Activated T-helper 1 cell treated with anti-CD3 and anti-CD28 coated beads, Interleukin-12 subunit alpha, Interleukin-12 subunit beta, Interleukin-2, Interleukin-4 antibody, amounts not matched to agents 30 ng/mL and 10 ng/mL and 1 ng/mL, durations not matched to agents 14 hours and 24 hours and 36 hours (primary cell): ENCODE measurements at regions of chr6 and their contacts with region 1.

Region 1: DNA sequence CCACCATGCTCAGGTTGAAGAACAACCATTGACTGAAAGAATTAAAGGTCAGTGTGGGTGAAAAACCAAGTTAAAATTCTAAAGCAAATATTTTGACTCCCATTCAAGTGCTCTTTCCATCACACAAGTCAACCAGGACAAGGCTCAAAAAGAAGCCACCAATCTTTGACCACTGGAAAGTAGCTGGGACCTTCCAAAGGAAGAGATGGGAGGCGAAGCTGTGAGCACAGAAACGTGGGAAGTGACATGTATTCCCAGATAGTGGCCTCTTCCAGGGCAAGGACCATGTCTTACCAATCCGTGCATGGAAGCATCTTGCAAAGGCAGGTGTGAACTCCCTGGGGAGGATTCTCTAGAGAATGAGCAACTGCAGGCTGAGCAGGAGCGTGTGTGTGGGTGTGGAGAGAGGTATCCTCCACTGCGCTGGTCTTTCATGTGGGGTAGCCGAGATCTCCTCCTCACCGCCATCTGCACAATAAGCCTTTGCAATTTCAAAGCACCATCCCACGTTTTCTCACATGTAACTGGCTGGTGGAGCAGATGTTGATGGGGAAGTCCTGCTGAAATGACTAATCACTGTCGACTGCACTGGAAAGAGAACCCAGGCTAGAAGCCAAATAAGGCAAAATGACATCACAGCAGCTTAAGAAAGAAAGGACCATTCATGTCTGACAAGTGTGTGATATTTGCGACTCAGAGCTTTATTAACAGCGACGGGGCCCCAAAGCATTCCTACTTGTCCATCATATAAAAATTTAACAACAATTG is 189.4 kb upstream of the RREB1 start:
- DNase-seq: peak; percentile 44
- H3K4me3 Mint-ChIP-seq: no peak overlapping the region
- H3K27ac Mint-ChIP-seq: peak overlapping the region; percentile 55
- H3K4me1 Mint-ChIP-seq: peaks cover 37% of the 10 kb centered on the region
- H3K27me3 Mint-ChIP-seq: peaks cover 18% of the 10 kb centered on the region

Region 2: GRCh38 chr6:6452002-6452401 is 466.4 kb before region 1 on chr6:
- intact Hi-C with region 1: no loop called
- DNase-seq: no peak
- H3K4me3 Mint-ChIP-seq: no peak overlapping the region
- H3K27ac Mint-ChIP-seq: no peak overlapping the region
- H3K4me1 Mint-ChIP-seq: no peaks in the 10 kb centered on the region
- H3K27me3 Mint-ChIP-seq: peaks cover 3% of the 10 kb centered on the region

Region 3: DNA sequence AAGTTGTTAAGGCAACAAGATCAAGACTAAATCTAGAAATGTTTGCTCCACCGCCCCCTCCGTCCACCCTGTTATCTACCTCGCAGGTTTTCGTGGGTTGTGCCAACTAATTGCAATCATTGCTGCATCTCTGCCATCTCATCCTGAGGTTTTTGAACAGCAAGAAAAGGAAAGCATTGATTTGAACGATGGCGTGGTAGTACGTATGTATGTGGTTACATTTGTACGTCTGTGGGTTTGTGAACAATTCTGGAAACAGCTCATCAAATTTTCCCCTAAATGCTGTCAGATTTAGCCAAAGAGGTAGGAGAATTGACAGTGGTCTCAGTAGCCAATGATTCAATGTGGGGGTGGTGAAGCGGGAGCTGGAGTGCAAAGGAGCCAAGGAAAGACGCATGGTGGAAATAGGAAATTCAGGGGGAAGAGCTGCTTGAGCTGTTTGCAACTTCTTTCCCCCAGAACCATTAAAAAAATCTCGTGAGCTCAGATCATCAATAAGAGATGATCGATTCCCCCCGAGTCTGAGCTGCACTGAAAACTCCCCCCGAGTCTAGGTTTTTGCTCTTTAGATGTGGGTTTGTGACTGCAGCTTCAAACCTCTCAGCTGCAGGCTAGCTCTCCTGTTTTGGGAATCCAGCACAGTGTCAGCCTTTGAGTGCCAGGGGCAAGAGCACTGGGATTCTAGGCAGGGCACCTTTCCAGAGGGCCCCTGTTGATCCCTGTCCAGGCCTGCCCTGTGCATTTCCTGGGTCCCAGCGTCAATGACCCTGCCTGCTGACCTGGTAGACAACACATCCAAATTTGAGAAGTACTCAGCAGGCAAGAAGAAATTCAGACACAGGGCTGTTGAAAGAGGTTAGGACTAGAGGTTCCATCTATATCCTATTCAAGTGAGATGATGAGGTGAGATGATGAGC is 402.5 kb before region 1 on chr6:
- intact Hi-C with region 1: loop called (anchors 1 kb)
- DNase-seq: peak; percentile 38
- H3K4me3 Mint-ChIP-seq: no peak overlapping the region
- H3K27ac Mint-ChIP-seq: peak overlapping the region; percentile 21
- H3K4me1 Mint-ChIP-seq: peaks cover 18% of the 10 kb centered on the region
- H3K27me3 Mint-ChIP-seq: peaks cover 80% of the 10 kb centered on the region

Region 4: DNA sequence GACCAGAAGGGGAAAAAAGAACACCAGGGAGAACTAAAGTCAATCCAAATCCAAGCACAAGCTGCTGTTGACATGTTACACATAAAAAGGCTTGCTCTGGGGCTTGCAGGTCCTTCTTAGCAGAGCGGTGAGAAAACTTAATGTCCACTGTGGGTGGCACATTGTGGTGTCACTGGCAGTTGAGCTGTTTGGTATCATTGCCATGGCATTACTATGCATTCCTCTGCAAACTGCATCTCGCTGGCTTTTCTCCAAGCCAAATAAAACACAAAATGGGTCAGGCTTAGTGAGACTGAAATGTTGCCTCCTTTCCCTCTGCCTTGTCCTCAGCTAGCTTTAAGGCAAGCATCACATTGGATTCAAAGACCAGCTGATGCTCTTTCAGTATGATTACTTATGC is 289.0 kb before region 1 on chr6:
- intact Hi-C with region 1: no loop called
- DNase-seq: no peak
- H3K4me3 Mint-ChIP-seq: no peak overlapping the region
- H3K27ac Mint-ChIP-seq: no peak overlapping the region
- H3K4me1 Mint-ChIP-seq: peaks cover 22% of the 10 kb centered on the region
- H3K27me3 Mint-ChIP-seq: peaks cover 4% of the 10 kb centered on the region

Region 5: GRCh38 chr6:6676910-6677441 is 241.4 kb before region 1 on chr6:
- intact Hi-C with region 1: loop called (anchors 2 kb)
- DNase-seq: peak; percentile 70
- H3K4me3 Mint-ChIP-seq: no peak overlapping the region
- H3K27ac Mint-ChIP-seq: no peak overlapping the region
- H3K4me1 Mint-ChIP-seq: peaks cover 24% of the 10 kb centered on the region
- H3K27me3 Mint-ChIP-seq: no peaks in the 10 kb centered on the region

Region 6: DNA sequence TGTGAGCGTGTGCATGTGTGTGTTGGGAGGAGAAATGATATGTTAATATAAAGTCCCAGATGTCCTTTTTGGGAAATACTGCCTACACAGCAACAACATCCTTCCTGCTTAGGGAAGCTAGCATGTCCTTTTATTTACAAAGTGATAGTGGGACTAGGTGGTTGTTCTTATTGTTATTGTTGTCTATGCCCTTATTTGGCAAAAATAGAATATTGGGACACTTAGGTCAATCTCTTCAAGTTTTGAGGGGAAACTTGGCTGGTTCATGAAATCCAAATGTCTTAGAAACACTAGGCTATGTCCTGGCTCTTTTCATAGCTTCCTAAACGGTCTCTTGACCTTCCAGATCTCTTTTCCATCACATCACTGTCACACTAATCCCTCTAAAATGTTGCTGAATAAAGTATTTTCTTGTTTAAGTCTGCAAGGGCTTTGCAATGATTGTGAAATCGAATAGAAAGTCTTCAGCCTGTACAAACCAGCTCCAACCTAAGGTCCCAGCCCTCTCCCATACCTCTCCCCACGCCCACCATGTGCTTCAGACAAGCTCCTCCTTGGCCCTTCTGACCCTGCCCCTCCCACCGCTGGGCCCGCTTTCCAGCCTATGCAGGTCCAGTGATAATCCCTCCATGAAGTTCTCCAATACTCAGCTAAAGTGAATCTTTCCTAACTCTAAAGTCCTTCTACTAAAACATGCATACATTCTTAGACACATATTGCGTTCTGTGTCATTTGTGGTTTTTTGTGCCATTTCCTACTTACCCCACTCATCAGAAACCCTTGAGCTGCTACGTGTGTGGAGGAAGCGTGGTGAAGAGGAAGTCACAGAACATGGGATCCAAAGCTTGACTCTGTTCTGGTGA is 124.8 kb before region 1 on chr6:
- intact Hi-C with region 1: loop called (anchors 1 kb)
- DNase-seq: no peak
- H3K4me3 Mint-ChIP-seq: peak overlapping the region; percentile 48
- H3K27ac Mint-ChIP-seq: peak overlapping the region; percentile 82
- H3K4me1 Mint-ChIP-seq: peaks cover 51% of the 10 kb centered on the region
- H3K27me3 Mint-ChIP-seq: peaks cover 10% of the 10 kb centered on the region

Region 7: DNA sequence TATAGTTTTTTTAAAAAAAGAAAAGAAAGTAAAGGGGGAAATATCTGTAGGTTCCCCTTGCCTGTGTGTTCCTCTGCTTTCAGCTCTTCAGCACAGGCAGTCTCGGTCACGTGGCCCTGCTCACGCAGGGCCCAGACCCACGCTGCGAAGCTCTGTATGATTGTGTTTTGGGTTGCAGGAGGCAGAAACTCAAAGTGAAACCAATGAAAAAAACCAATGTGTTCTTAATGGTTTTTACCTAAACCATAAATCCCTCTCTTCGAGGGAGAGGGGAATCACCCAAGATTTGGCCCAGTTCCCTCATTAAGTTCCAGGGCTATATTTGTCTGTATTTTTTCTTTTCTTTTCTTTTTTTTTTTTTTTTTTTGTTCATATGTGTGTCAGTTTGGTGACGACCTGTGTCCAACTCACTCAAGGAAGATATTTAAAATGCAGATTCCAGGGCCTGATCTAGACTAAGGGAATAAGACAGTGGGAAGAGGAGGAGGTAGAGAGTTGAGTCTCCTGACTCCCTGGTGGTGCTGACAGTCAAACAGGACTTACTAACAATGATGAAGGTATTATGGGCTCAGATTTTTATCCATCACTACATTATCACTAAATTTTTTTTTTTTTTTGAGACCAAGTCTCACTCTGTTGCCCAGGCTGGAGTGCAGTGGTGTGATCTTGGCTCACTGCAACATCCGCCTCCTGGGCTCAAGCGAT is 155.6 kb after region 1 on chr6:
- intact Hi-C with region 1: loop called (anchors 1 kb)
- DNase-seq: peak; percentile 55
- H3K4me3 Mint-ChIP-seq: no peak overlapping the region
- H3K27ac Mint-ChIP-seq: peak overlapping the region; percentile 74
- H3K4me1 Mint-ChIP-seq: peaks cover 13% of the 10 kb centered on the region
- H3K27me3 Mint-ChIP-seq: peaks cover 70% of the 10 kb centered on the region

Region 8: GRCh38 chr6:7140631-7141378 is 222.4 kb after region 1 on chr6:
- intact Hi-C with region 1: loop called (anchors 1 kb)
- DNase-seq: peak; percentile 78
- H3K4me3 Mint-ChIP-seq: peak overlapping the region; percentile 84
- H3K27ac Mint-ChIP-seq: peak overlapping the region; percentile 84
- H3K4me1 Mint-ChIP-seq: peaks cover 68% of the 10 kb centered on the region
- H3K27me3 Mint-ChIP-seq: no peaks in the 10 kb centered on the region